ENCODE measurements at regions of chr14 and their contacts with region 1.

Region 1: GRCh38 chr14:68911594-68912227 is 67.4 kb downstream of the ACTN1 start:
- DNase-seq: peak; percentile 54 to 89 (median 73)
- ATAC-seq: peak; percentile 94 to 99 (median 94)
- H3K4me3 ChIP-seq: no peak overlapping the region
- H3K4me3 Mint-ChIP-seq: peak overlapping the region in 1 of 3 donors; percentile 1
- H3K27ac ChIP-seq: no peak overlapping the region
- H3K27ac Mint-ChIP-seq: peak overlapping the region; percentile 39 to 80
- H3K4me1 ChIP-seq: peaks cover 2 to 19% of the 10 kb centered on the region in 2 experiments
- H3K4me1 Mint-ChIP-seq: peaks cover 29 to 48% (median 40%) of the 10 kb centered on the region in 3 donors
- H3K27me3 ChIP-seq: no peaks in the 10 kb centered on the region
- H3K27me3 Mint-ChIP-seq: no peaks in the 10 kb centered on the region

Region 2: DNA sequence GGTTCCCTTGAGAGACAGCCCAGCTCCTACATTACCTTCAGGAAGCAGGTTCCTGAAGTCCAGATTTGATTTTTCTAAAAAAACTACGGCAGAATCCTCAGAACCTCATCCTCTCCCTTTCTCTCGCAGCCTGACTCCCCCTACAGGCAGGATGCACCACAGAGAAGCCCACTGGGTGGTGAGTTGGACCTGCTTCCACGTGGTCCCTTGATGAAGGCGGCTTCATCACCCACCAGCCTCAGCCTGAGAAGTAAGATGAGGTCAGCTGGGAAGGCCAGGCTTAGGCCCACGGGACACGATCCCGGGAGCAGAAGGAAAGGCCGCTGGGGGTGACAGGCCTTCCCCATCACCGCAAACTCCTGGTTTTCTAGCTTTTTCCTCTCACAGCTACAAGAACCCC is 15.6 kb before region 1 on chr14:
- CTCF ChIA-PET with region 1: no interaction called
- POLR2A ChIA-PET with region 1: no interaction called
- DNase-seq: no peak
- ATAC-seq: no peak
- H3K4me3 ChIP-seq: no peak overlapping the region
- H3K4me3 Mint-ChIP-seq: no peak overlapping the region
- H3K27ac ChIP-seq: no peak overlapping the region
- H3K27ac Mint-ChIP-seq: peak overlapping the region in 1 of 2 donors; percentile 31
- H3K4me1 ChIP-seq: peaks cover 0 to 9% of the 10 kb centered on the region in 2 experiments
- H3K4me1 Mint-ChIP-seq: peaks cover 13 to 29% (median 14%) of the 10 kb centered on the region in 3 donors
- H3K27me3 ChIP-seq: peaks cover 0 to 3% of the 10 kb centered on the region in 2 experiments
- H3K27me3 Mint-ChIP-seq: no peaks in the 10 kb centered on the region

Region 3: GRCh38 chr14:69107407-69108003 is 195.8 kb after region 1 on chr14:
- CTCF ChIA-PET with region 1: interaction called, 6 to 24 read pairs
- POLR2A ChIA-PET with region 1: interaction called in 1 of 2 experiments, 4 read pairs
- DNase-seq: peak in 19 of 35 experiments; percentile 4 to 67 (median 12)
- ATAC-seq: peak; percentile 50 to 68 (median 58)
- H3K4me3 ChIP-seq: no peak overlapping the region
- H3K4me3 Mint-ChIP-seq: no peak overlapping the region
- H3K27ac ChIP-seq: no peak overlapping the region
- H3K27ac Mint-ChIP-seq: no peak overlapping the region
- H3K4me1 ChIP-seq: no peaks in the 10 kb centered on the region
- H3K4me1 Mint-ChIP-seq: peaks cover 0 to 9% (median 7%) of the 10 kb centered on the region in 3 donors
- H3K27me3 ChIP-seq: no peaks in the 10 kb centered on the region
- H3K27me3 Mint-ChIP-seq: no peaks in the 10 kb centered on the region

Measured in T-cell (primary cell).